ENCODE measurements at regions of chr14 and their contacts with region 1.

Region 1: GRCh38 chr14:49620182-49621113 is at the starts of genes MGAT2 and RPL36AL:
- DNase-seq: peak; percentile 99
- ATAC-seq: peak; percentile 100
- total RNA-seq, gene MGAT2: 10.8 TPM
- total RNA-seq, gene RPL36AL: 138 TPM

Region 2: DNA sequence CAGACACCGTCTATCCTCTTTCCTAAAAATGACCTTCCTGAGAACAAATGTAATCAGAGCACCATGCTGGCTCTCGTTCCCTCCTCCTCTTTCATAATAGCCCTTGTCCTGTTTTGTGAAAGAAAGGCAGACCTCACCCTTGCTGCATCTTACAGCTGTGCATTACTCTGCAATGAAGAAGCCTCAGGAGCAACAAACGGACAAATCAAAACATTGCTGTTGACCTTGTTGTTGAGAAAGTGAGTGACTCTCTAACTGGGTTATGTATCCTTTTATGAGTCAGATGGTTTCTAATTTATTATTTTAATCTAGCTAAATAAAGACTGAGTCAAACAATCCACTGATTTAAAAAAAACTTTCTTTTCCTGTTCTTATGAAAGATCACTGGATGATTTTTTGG is 215.2 kb before region 1 on chr14:
- intact Hi-C with region 1: no loop called
- DNase-seq: no peak
- ATAC-seq: no peak

Region 3: GRCh38 chr14:49585803-49586672 is 34.4 kb before region 1 on chr14 and contains the start of gene RPS29:
- intact Hi-C with region 1: loop called (anchors 5 kb)
- DNase-seq: peak; percentile 98
- ATAC-seq: peak; percentile 98
- total RNA-seq, gene RPS29: 918 TPM

Region 4: DNA sequence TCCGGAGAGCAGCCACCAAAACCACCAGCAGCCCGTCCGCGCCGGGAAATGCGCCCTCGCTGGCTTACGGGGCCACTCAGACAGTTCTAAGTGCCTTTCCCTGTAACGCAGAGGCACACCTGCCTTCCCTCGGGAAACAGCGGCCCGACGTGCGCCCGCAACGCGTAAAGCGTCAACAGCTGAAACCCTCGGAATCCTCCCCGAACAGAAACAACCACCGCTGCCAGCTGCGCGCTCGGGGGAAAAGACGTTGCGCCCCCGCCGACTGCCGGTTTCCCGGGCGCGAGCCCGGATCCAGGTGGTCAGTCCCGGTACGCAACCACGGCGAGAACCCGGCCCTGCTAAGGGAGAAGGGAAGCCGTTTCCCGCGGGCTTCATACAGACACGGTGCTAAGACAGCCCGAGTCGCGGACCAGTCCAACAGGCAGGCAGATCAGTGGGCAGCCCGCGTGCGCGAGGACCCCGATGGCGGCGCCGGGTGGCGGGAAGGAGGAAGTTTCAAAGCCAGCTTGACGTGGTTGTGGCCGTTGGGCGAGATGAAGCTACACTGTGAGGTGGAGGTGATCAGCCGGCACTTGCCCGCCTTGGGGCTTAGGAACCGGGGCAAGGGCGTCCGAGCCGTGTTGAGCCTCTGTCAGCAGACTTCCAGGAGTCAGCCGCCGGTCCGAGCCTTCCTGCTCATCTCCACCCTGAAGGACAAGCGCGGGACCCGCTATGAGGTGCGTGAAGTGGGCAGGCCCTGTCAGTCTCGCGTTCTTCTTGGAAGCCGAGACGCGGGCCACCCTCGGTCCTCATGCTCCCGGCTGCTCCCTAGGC is 21.8 kb before region 1 on chr14 and contains the start of gene LRR1:
- intact Hi-C with region 1: loop called (anchors 2 kb)
- DNase-seq: peak; percentile 95
- ATAC-seq: peak; percentile 90
- total RNA-seq, gene LRR1: 6.2 TPM

Region 5: DNA sequence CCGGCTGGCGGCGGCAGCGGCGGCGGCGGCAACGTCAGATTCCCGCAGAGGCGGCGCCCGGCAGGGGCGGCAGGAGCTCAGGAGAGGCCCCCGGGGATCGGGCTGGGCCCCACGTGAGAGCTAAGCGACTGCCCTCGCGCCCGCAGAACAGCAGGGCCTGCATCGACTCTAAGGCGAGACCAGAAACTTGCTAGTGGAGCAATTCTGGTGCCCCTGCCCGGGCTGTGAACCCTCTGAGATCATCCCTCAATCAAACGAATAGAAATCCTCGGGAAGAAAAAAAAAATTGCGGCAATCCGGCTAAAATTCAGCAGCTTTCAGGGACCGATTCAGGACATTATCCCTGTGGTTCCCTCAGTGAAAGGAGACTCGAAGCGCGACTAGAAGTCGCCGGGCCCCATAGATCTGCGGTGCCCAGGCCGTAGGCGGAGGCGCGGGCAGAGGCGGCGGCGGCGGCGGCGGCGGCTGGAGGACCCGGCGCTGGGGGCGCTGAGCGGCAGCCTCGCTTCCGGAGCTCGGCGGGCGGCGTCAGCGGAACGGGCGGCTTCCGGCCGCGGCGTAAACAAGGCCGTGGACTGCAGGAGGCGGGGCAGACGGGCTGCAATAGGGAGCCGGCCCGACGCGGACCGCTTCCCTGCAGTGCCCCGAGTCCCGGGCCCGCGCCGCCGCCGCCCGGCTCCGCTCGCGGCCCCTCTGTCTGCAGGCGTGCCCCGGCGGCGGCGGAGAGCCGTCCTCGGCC is 147.3 kb after region 1 on chr14 and contains the start of gene KLHDC2:
- intact Hi-C with region 1: no loop called
- DNase-seq: peak; percentile 97
- ATAC-seq: peak; percentile 96
- total RNA-seq, gene KLHDC2: 84.4 TPM

Measured in Right ventricle myocardium inferior (tissue), 1 donor.